CD8-positive, alpha-beta T cell (primary cell): ENCODE measurements at regions of chr4 and their contacts with region 1.

Region 1: GRCh38 chr4:6873792-6874461 is 35.7 kb upstream of the TBC1D14 start:
- DNase-seq: peak; percentile 69 to 89 (median 82)
- ATAC-seq: peak; percentile 96
- H3K4me3 ChIP-seq: no peak overlapping the region
- H3K4me3 Mint-ChIP-seq: no peak overlapping the region
- H3K27ac ChIP-seq: no peak overlapping the region
- H3K27ac Mint-ChIP-seq: no peak overlapping the region
- H3K4me1 ChIP-seq: no peaks in the 10 kb centered on the region
- H3K4me1 Mint-ChIP-seq: peaks cover 3% of the 10 kb centered on the region
- H3K27me3 ChIP-seq: no peaks in the 10 kb centered on the region
- H3K27me3 Mint-ChIP-seq: no peaks in the 10 kb centered on the region
- CTCF ChIP-seq: peak; percentile 79

Region 2: DNA sequence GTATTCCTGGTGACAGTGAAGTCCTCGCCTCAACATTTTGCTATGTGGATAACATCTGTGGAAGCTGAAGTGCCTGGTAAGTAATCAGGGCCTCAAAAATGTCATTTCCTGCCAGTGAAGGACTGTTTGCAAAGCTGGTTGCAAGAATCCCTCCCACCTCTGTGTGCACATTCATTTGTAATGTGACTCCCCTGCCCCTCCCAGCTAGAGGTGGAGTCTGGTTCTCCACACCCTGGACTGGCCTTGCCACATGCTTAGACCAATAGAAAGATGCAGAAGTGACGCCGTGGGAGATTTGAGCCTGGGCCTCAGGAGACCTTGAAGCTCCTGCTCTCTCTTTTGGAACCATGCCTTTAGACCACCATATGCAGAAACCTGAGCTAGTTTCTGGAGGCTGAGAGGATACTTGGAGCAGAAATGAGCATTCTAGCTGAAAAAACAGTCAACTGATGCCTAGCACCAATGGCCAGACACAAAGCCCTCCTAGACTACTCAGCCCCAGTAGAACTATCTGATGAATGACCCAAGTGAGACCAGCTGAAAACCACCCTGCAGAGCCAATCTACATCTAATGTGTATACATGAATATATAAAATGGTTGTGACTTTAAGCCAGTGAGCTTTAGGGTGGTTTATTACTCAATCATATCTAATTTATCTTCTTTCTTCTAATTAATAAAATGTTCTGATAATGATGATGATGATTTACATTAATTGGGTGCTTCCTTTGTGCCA is 933.3 kb before region 1 on chr4:
- CTCF ChIA-PET with region 1: no interaction called
- POLR2A ChIA-PET with region 1: no interaction called
- intact Hi-C with region 1: no loop called
- DNase-seq: no peak
- ATAC-seq: no peak
- H3K4me3 ChIP-seq: no peak overlapping the region
- H3K4me3 Mint-ChIP-seq: no peak overlapping the region
- H3K27ac ChIP-seq: no peak overlapping the region
- H3K27ac Mint-ChIP-seq: no peak overlapping the region
- H3K4me1 ChIP-seq: no peaks in the 10 kb centered on the region
- H3K4me1 Mint-ChIP-seq: peaks cover 3% of the 10 kb centered on the region
- H3K27me3 ChIP-seq: no peaks in the 10 kb centered on the region
- H3K27me3 Mint-ChIP-seq: peaks cover 6% of the 10 kb centered on the region
- CTCF ChIP-seq: no peak

Region 3: DNA sequence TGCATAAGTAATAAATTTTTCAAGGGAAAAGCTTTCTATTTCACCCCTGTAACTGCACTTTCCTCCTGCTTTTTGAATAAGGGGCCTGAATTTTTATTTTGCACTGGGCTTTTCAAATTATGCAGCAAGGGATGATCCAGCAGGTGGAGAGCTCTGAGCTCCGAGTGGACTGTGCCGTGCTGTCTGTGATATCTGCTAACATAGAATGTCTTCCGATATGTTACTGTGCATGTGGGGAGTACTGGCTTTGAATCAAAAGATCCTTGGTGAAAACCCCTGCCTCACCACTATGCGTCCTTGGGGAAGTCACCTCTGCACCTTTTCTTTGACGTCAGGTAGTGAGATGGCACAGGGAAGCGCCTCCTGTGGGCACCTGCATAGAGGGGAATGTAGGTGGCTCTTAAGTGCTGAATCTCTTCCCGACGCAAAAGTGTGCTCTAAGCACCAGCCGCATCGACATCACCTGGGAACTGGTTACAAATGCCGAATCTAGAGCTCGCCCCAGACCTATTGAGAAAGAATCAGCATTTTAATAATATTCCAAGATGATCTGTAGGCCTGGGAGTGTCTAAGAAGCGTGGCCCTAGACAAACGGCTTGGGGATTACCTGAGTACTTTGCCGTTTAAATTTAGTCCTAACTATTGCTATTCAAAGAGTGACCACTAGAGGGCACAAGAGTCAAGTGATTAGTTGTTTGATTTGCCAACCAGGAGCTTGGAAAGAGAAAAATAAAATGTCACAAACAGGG is 623.5 kb before region 1 on chr4:
- CTCF ChIA-PET with region 1: no interaction called
- POLR2A ChIA-PET with region 1: no interaction called
- intact Hi-C with region 1: loop called in 1 of 2 experiments (anchors 5 kb)
- DNase-seq: peak in 3 of 9 experiments; percentile 35 to 79 (median 75)
- ATAC-seq: peak; percentile 62
- H3K4me3 ChIP-seq: no peak overlapping the region
- H3K4me3 Mint-ChIP-seq: no peak overlapping the region
- H3K27ac ChIP-seq: no peak overlapping the region
- H3K27ac Mint-ChIP-seq: no peak overlapping the region
- H3K4me1 ChIP-seq: no peaks in the 10 kb centered on the region
- H3K4me1 Mint-ChIP-seq: no peaks in the 10 kb centered on the region
- H3K27me3 ChIP-seq: peaks cover 6 to 7% of the 10 kb centered on the region in 2 experiments
- H3K27me3 Mint-ChIP-seq: peaks cover 37% of the 10 kb centered on the region
- CTCF ChIP-seq: peak; percentile 76

Region 4: GRCh38 chr4:6716018-6716911 is 157.7 kb before region 1 on chr4 and contains the start of gene BLOC1S4:
- CTCF ChIA-PET with region 1: interaction called, 251 read pairs
- POLR2A ChIA-PET with region 1: interaction called, 25 read pairs
- intact Hi-C with region 1: loop called (anchors 1 kb)
- DNase-seq: peak; percentile 77 to 98 (median 88)
- ATAC-seq: peak; percentile 83
- H3K4me3 ChIP-seq: peak within 1 kb of the TSS; percentile 74 to 81
- H3K4me3 Mint-ChIP-seq: peak within 1 kb of the TSS; percentile 95
- H3K27ac ChIP-seq: peak within 1 kb of the TSS; percentile 75 to 80
- H3K27ac Mint-ChIP-seq: peak within 1 kb of the TSS; percentile 97
- H3K4me1 ChIP-seq: peaks cover 25% of the 10 kb centered on the region
- H3K4me1 Mint-ChIP-seq: peaks cover 48% of the 10 kb centered on the region
- H3K27me3 ChIP-seq: no peaks in the 10 kb centered on the region
- H3K27me3 Mint-ChIP-seq: no peaks in the 10 kb centered on the region
- CTCF ChIP-seq: peak; percentile 18
- total RNA-seq, gene BLOC1S4: 29.7 to 30.7 TPM

Region 5: DNA sequence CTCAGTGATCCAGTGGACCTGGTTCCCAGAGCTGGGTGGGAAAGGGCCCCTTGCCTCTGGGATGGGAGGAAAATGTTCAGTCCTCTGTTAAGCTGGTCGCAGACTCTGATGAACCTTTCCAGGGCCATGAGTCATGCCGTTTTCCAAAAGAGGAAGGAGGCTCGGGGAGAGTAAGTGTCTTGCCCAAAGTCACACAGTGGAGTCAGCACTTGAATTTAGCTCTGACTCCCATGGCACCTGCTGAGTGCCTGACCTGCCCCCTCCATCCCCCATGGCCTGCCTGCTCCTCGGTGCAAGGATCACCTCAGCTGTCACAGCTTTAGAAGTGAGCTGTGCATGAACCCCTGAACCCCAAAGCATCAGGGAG is 105.4 kb before region 1 on chr4:
- CTCF ChIA-PET with region 1: interaction called, 10 read pairs
- POLR2A ChIA-PET with region 1: no interaction called
- intact Hi-C with region 1: no loop called
- DNase-seq: no peak
- ATAC-seq: no peak
- H3K4me3 ChIP-seq: peak overlapping the region in 1 of 2 experiments; percentile 34
- H3K4me3 Mint-ChIP-seq: no peak overlapping the region
- H3K27ac ChIP-seq: no peak overlapping the region
- H3K27ac Mint-ChIP-seq: no peak overlapping the region
- H3K4me1 ChIP-seq: peaks cover 30% of the 10 kb centered on the region
- H3K4me1 Mint-ChIP-seq: peaks cover 46% of the 10 kb centered on the region
- H3K27me3 ChIP-seq: no peaks in the 10 kb centered on the region
- H3K27me3 Mint-ChIP-seq: no peaks in the 10 kb centered on the region
- CTCF ChIP-seq: no peak

Region 6: DNA sequence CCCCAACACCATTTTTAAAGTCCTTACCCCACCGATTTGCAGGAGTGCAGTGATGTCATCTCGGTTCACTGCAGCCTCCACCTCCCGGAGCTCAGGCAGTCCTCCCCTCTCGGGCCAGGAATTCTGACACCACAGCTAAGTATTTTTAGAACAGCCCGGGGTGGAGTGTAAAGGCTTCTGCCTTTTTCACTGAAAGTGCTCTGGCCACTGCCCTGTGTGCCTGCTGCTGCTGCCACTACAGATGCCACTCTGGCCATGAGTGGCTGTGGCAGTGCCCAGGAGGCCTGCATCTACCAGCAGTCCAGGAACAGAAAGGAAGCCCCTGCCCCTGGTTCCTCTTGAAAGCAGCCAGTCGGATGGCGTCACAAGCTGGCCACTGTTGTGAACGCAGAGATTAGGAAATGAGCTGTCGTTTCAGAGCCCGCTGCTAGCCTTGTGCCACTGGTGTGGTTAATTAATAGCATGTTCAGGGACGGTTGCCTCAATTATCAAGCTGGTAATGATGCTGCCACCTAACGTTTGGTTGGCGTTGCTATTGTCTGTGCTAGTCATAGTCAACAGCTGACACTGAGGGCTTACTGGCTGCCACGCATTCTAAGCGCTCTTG is 12.1 kb after region 1 on chr4:
- CTCF ChIA-PET with region 1: interaction called, 28 read pairs
- POLR2A ChIA-PET with region 1: no interaction called
- intact Hi-C with region 1: no loop called
- DNase-seq: peak in 2 of 9 experiments; percentile 45 to 55
- ATAC-seq: no peak
- H3K4me3 ChIP-seq: no peak overlapping the region
- H3K4me3 Mint-ChIP-seq: no peak overlapping the region
- H3K27ac ChIP-seq: no peak overlapping the region
- H3K27ac Mint-ChIP-seq: peak overlapping the region; percentile 66
- H3K4me1 ChIP-seq: peaks cover 3% of the 10 kb centered on the region
- H3K4me1 Mint-ChIP-seq: peaks cover 5% of the 10 kb centered on the region
- H3K27me3 ChIP-seq: no peaks in the 10 kb centered on the region
- H3K27me3 Mint-ChIP-seq: no peaks in the 10 kb centered on the region
- CTCF ChIP-seq: no peak

Region 7: GRCh38 chr4:6898763-6899162 is 24.8 kb after region 1 on chr4:
- CTCF ChIA-PET with region 1: interaction called, 28 read pairs
- POLR2A ChIA-PET with region 1: no interaction called
- intact Hi-C with region 1: no loop called
- DNase-seq: peak in 1 of 9 experiments; percentile 31
- ATAC-seq: peak; percentile 20
- H3K4me3 ChIP-seq: no peak overlapping the region
- H3K4me3 Mint-ChIP-seq: peak overlapping the region; percentile 24
- H3K27ac ChIP-seq: peak overlapping the region; percentile 33 to 77
- H3K27ac Mint-ChIP-seq: peak overlapping the region; percentile 89
- H3K4me1 ChIP-seq: peaks cover 23% of the 10 kb centered on the region
- H3K4me1 Mint-ChIP-seq: peaks cover 34% of the 10 kb centered on the region
- H3K27me3 ChIP-seq: no peaks in the 10 kb centered on the region
- H3K27me3 Mint-ChIP-seq: no peaks in the 10 kb centered on the region
- CTCF ChIP-seq: no peak

Region 8: GRCh38 chr4:7049295-7049694 is 175.4 kb after region 1 on chr4:
- CTCF ChIA-PET with region 1: no interaction called
- POLR2A ChIA-PET with region 1: no interaction called
- intact Hi-C with region 1: no loop called
- DNase-seq: no peak
- ATAC-seq: no peak
- H3K4me3 ChIP-seq: no peak overlapping the region
- H3K4me3 Mint-ChIP-seq: no peak overlapping the region
- H3K27ac ChIP-seq: no peak overlapping the region
- H3K27ac Mint-ChIP-seq: no peak overlapping the region
- H3K4me1 ChIP-seq: peaks cover 54% of the 10 kb centered on the region
- H3K4me1 Mint-ChIP-seq: peaks cover 64% of the 10 kb centered on the region
- H3K27me3 ChIP-seq: no peaks in the 10 kb centered on the region
- H3K27me3 Mint-ChIP-seq: no peaks in the 10 kb centered on the region
- CTCF ChIP-seq: no peak